Natural killer cell (primary cell): ENCODE measurements at regions of chr5 and their contacts with region 1.

Region 1: DNA sequence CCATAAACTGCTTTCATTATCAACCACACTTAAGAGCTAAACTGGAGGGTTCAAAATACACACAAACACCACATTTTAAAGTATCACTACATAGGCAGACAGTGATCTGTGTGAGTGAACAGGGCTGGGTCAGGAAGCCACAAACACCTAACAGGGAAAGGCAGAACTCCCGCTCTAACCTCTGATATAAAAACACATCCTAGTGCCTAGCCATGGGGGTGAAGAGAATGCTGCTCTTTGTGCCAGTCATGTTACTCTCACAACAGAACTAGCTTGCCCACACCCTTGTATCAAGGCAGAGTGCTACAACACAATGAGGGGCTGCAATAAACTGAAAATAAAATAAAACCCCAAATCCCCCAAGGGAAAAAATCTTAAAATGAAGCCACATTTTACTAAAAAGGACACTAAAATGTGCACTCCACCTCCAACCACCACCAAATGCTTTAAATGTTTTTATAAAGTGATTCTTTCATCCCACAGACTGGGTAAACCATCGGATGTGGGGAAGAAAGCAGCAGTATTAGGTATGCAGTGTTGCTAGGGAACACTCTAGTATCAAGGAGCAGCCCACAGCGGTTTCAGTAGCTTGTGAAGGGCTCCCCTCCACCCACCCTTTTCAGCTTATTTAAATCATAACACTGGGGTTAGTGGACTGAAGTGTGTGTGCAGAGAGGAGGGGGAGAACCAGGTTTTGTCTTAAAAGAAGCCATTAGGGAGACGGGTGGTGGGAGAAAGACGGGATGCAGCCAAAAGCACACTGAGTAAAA is 64.5 kb downstream of the TMEM161B start:
- DNase-seq: peak; percentile 51 to 80
- ATAC-seq: peak; percentile 92 to 95 (median 94)
- H3K4me3 ChIP-seq: peak overlapping the region; percentile 1
- H3K4me3 Mint-ChIP-seq: peak overlapping the region; percentile 83
- H3K27ac ChIP-seq: peak overlapping the region; percentile 78
- H3K27ac Mint-ChIP-seq: peak overlapping the region; percentile 85 to 90
- H3K4me1 ChIP-seq: peaks cover 7% of the 10 kb centered on the region
- H3K4me1 Mint-ChIP-seq: peaks cover 14% of the 10 kb centered on the region in 2 donors
- H3K27me3 ChIP-seq: no peaks in the 10 kb centered on the region
- H3K27me3 Mint-ChIP-seq: no peaks in the 10 kb centered on the region
- CTCF ChIP-seq: no peak

Region 2: GRCh38 chr5:88251048-88251711 is 47.0 kb after region 1 on chr5:
- intact Hi-C with region 1: loop called (anchors 1 kb)
- DNase-seq: peak in 1 of 2 donors; percentile 30
- ATAC-seq: peak; percentile 69 to 92 (median 88)
- H3K4me3 ChIP-seq: no peak overlapping the region
- H3K4me3 Mint-ChIP-seq: no peak overlapping the region
- H3K27ac ChIP-seq: no peak overlapping the region
- H3K27ac Mint-ChIP-seq: peak overlapping the region; percentile 73 to 87
- H3K4me1 ChIP-seq: peaks cover 3% of the 10 kb centered on the region
- H3K4me1 Mint-ChIP-seq: peaks cover 57 to 67% of the 10 kb centered on the region in 2 donors
- H3K27me3 ChIP-seq: no peaks in the 10 kb centered on the region
- H3K27me3 Mint-ChIP-seq: no peaks in the 10 kb centered on the region
- CTCF ChIP-seq: no peak

Region 3: DNA sequence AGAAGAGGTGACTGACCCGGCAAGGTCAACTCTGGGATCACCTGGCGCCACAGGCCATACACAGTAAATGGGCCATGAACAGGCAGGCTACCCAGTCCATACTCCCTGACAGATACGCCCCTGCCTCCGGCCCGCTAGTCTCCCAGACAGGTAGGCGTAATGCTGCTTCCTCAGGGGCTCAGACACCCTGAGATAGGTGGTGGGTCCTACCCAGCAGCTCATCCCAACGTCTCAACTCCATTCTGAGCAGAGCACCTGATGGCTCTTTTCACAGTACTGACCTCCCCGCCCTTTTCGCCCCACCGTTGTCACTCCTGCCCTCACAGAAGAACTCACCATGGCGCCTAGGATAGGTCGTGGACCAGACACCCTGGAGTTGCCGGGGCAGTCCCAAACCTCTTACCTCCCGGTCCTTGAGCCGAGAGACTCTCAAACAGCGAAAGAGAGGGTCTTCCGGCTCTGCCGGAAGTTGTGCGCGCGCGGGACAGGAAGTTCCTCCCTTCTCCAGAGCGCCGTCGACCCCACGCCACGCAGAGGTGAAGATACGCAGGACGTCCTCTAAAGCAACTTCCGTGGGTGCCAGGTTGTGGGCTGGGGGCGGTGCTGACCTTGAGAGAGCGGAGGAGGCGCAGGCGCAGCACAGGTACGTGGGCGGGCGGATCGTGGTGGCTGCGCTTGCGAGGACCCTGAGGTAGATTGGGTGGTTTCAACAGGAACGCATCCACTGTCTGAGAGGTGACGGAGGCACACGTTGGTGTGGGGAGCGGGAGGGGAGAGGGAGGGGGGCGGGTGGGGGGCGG is 64.4 kb after region 1 on chr5 and contains the start of gene TMEM161B:
- intact Hi-C with region 1: loop called (anchors 1 kb)
- DNase-seq: peak; percentile 89 to 99
- ATAC-seq: peak; percentile 96 to 100 (median 97)
- H3K4me3 ChIP-seq: peak within 1 kb of the TSS; percentile 55
- H3K4me3 Mint-ChIP-seq: peak within 1 kb of the TSS; percentile 96
- H3K27ac ChIP-seq: peak within 1 kb of the TSS; percentile 89
- H3K27ac Mint-ChIP-seq: peak within 1 kb of the TSS; percentile 90 to 97
- H3K4me1 ChIP-seq: peaks cover 9% of the 10 kb centered on the region
- H3K4me1 Mint-ChIP-seq: peaks cover 34 to 56% of the 10 kb centered on the region in 2 donors
- H3K27me3 ChIP-seq: no peaks in the 10 kb centered on the region
- H3K27me3 Mint-ChIP-seq: no peaks in the 10 kb centered on the region
- CTCF ChIP-seq: no peak
- total RNA-seq, gene TMEM161B: 29.8 to 33.9 (median 33.2) TPM

Region 4: GRCh38 chr5:88502179-88503040 is 298.2 kb after region 1 on chr5:
- intact Hi-C with region 1: loop called (anchors 1 kb)
- DNase-seq: peak in 1 of 2 donors; percentile 56
- ATAC-seq: peak; percentile 66 to 89 (median 87)
- H3K4me3 ChIP-seq: peak overlapping the region; percentile 54
- H3K4me3 Mint-ChIP-seq: peak overlapping the region; percentile 89
- H3K27ac ChIP-seq: peak overlapping the region; percentile 59
- H3K27ac Mint-ChIP-seq: peak overlapping the region; percentile 60 to 77
- H3K4me1 ChIP-seq: peaks cover 2% of the 10 kb centered on the region
- H3K4me1 Mint-ChIP-seq: peaks cover 12 to 15% of the 10 kb centered on the region in 2 donors
- H3K27me3 ChIP-seq: no peaks in the 10 kb centered on the region
- H3K27me3 Mint-ChIP-seq: peaks cover 9 to 15% of the 10 kb centered on the region in 2 donors
- CTCF ChIP-seq: no peak